Calu3 (cell line): ENCODE measurements at regions of chr5 and their contacts with region 1.

Region 1: GRCh38 chr5:107217721-107218130 is 453.0 kb downstream of the EFNA5 start:
- DNase-seq: peak; percentile 86
- H3K4me3 Mint-ChIP-seq: peak overlapping the region; percentile 44
- H3K27ac Mint-ChIP-seq: peak overlapping the region; percentile 91
- H3K4me1 Mint-ChIP-seq: peaks cover 52% of the 10 kb centered on the region
- H3K27me3 Mint-ChIP-seq: no peaks in the 10 kb centered on the region
- CTCF ChIP-seq: no peak

Region 2: GRCh38 chr5:106964132-106964531 is 253.6 kb before region 1 on chr5:
- CTCF ChIA-PET with region 1: no interaction called
- intact Hi-C with region 1: loop called (anchors 10 kb)
- DNase-seq: peak; percentile 27
- H3K4me3 Mint-ChIP-seq: no peak overlapping the region
- H3K27ac Mint-ChIP-seq: no peak overlapping the region
- H3K4me1 Mint-ChIP-seq: peaks cover 31% of the 10 kb centered on the region
- H3K27me3 Mint-ChIP-seq: no peaks in the 10 kb centered on the region
- CTCF ChIP-seq: no peak

Region 3: DNA sequence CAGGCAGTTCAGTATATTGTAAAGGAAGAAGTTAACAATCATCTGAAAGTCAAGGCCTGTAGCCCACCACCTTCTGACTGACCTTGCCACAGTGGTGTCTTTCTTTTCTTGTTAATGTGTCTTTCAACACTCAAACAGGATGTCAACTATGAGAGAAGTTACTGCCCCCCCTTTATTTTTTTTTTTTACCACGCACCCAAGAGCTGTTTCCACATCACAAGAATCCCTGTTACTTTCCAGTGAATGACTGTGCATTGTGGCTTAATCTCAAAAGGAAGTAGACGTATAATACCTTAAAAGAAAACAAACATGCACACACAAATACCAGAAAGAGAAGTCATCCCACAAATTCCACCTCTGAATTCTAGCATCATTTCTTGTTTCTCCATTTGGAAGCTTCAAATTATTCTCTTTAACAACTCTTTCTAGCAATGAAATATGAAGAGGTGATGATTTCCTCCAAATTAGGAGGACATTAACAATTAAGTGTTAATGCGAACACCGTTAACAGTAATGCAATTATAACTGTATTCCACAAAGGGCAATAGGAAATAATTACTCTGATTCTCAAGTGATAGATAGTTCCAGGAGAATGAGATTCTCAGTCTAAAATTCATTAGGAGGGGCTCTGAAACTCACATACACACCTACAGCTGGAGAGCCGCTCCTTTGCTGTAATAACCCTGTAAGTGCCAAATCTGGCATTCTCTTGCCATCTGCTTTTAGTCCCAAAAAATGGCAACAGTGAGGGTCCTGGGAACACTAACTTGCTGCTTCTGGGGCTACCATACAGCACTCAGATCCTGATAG is 252.0 kb after region 1 on chr5:
- CTCF ChIA-PET with region 1: no interaction called
- intact Hi-C with region 1: loop called (anchors 5 kb)
- DNase-seq: peak; percentile 66
- H3K4me3 Mint-ChIP-seq: peak overlapping the region; percentile 45
- H3K27ac Mint-ChIP-seq: peak overlapping the region; percentile 96
- H3K4me1 Mint-ChIP-seq: peaks cover 95% of the 10 kb centered on the region
- H3K27me3 Mint-ChIP-seq: no peaks in the 10 kb centered on the region
- CTCF ChIP-seq: no peak